GM12878 (cell line): ENCODE measurements at regions of chr13 and their contacts with region 1.

Region 1: DNA sequence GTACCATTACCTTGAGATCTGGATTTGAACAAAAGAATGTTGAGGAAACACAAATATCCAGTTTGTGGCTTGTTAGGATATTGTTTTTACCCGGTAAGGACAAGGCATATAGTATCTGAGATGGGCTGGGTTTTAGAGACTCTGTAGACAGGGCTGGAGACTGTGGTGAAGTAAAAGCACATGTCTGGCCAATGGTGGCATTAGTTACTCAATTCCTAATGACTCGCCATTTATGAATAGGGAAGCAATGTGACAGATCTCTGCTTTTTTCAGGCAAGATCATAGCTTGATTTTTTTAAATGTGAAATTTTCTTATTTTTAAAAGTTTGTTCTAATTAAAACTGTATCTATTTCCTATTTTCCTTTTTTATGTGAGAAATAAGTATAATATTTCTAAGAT is 371.1 kb upstream of the SPRY2 start:
- DNase-seq: no peak
- ATAC-seq: no peak
- H3K4me3 ChIP-seq: no peak overlapping the region
- H3K27ac ChIP-seq: no peak overlapping the region
- H3K4me1 ChIP-seq: no peaks in the 10 kb centered on the region
- H3K27me3 ChIP-seq: no peaks in the 10 kb centered on the region
- CTCF ChIP-seq: no peak
- EP300 ChIP-seq: no peak
- POLR2A ChIP-seq: no peak
- RAD21 ChIP-seq: no peak

Region 2: DNA sequence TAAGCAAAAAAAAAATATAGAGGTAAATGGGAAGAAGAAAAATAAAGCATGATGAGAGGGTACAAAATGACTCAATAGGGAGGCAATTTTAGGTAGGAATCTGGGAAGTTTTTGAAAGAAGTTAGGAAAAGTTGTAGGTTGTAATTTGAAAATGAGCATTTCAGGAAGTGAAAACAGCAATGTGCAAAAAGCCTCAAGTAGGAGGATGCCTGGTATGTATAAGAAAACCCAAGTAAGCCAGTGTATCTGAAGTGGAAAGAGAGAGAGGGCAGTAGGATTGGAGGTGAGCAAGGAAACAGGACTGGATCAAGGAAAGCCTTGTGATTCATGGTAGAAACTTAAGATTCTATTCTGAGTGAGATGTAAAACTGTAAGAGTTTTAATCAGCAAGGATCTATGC is 249.5 kb before region 1 on chr13:
- CTCF ChIA-PET with region 1: no interaction called
- POLR2A ChIA-PET with region 1: no interaction called
- RAD21 ChIA-PET with region 1: no interaction called
- SMC1A ChIA-PET with region 1: no interaction called
- in situ Hi-C with region 1: no loop called
- intact Hi-C with region 1: no loop called
- DNase-seq: no peak
- ATAC-seq: peak; percentile 70
- H3K4me3 ChIP-seq: no peak overlapping the region
- H3K27ac ChIP-seq: no peak overlapping the region
- H3K4me1 ChIP-seq: no peaks in the 10 kb centered on the region
- H3K27me3 ChIP-seq: no peaks in the 10 kb centered on the region
- CTCF ChIP-seq: no peak
- EP300 ChIP-seq: no peak
- POLR2A ChIP-seq: no peak
- RAD21 ChIP-seq: no peak

Region 3: GRCh38 chr13:80684217-80684991 is 27.6 kb before region 1 on chr13:
- CTCF ChIA-PET with region 1: interaction called, 6 read pairs
- POLR2A ChIA-PET with region 1: no interaction called
- RAD21 ChIA-PET with region 1: interaction called, 5 read pairs
- SMC1A ChIA-PET with region 1: interaction called, 12 read pairs
- in situ Hi-C with region 1: no loop called
- intact Hi-C with region 1: no loop called
- DNase-seq: no peak
- ATAC-seq: no peak
- H3K4me3 ChIP-seq: no peak overlapping the region
- H3K27ac ChIP-seq: no peak overlapping the region
- H3K4me1 ChIP-seq: no peaks in the 10 kb centered on the region
- H3K27me3 ChIP-seq: no peaks in the 10 kb centered on the region
- CTCF ChIP-seq: no peak
- EP300 ChIP-seq: no peak
- POLR2A ChIP-seq: no peak
- RAD21 ChIP-seq: no peak